AG04450 (cell line): ENCODE measurements at regions of chr13 and their contacts with region 1.

Region 1: GRCh38 chr13:37561031-37561430 is 37.5 kb downstream of the POSTN start:
- DNase-seq: no peak
- H3K4me3 ChIP-seq: no peak overlapping the region
- H3K27ac ChIP-seq: no peak overlapping the region
- H3K27me3 ChIP-seq: no peaks in the 10 kb centered on the region
- CTCF ChIP-seq: no peak

Region 2: GRCh38 chr13:37338726-37339385 is 222.2 kb before region 1 on chr13:
- CTCF ChIA-PET with region 1: no interaction called
- POLR2A ChIA-PET with region 1: no interaction called
- DNase-seq: no peak
- H3K4me3 ChIP-seq: no peak overlapping the region
- H3K27ac ChIP-seq: no peak overlapping the region
- H3K27me3 ChIP-seq: no peaks in the 10 kb centered on the region
- CTCF ChIP-seq: no peak

Region 3: GRCh38 chr13:37539976-37540605 is 20.9 kb before region 1 on chr13:
- CTCF ChIA-PET with region 1: no interaction called
- POLR2A ChIA-PET with region 1: interaction called, 12 read pairs
- DNase-seq: peak; percentile 75
- H3K4me3 ChIP-seq: no peak overlapping the region
- H3K27ac ChIP-seq: no peak overlapping the region
- H3K27me3 ChIP-seq: no peaks in the 10 kb centered on the region
- CTCF ChIP-seq: no peak

Region 4: GRCh38 chr13:38202740-38203139 is 641.7 kb after region 1 on chr13:
- CTCF ChIA-PET with region 1: no interaction called
- POLR2A ChIA-PET with region 1: no interaction called
- DNase-seq: no peak
- H3K4me3 ChIP-seq: no peak overlapping the region
- H3K27ac ChIP-seq: no peak overlapping the region
- H3K27me3 ChIP-seq: no peaks in the 10 kb centered on the region
- CTCF ChIP-seq: no peak